Sigmoid colon (tissue), 7 donors: ENCODE measurements at regions of chr2 and their contacts with region 1.

Region 1: DNA sequence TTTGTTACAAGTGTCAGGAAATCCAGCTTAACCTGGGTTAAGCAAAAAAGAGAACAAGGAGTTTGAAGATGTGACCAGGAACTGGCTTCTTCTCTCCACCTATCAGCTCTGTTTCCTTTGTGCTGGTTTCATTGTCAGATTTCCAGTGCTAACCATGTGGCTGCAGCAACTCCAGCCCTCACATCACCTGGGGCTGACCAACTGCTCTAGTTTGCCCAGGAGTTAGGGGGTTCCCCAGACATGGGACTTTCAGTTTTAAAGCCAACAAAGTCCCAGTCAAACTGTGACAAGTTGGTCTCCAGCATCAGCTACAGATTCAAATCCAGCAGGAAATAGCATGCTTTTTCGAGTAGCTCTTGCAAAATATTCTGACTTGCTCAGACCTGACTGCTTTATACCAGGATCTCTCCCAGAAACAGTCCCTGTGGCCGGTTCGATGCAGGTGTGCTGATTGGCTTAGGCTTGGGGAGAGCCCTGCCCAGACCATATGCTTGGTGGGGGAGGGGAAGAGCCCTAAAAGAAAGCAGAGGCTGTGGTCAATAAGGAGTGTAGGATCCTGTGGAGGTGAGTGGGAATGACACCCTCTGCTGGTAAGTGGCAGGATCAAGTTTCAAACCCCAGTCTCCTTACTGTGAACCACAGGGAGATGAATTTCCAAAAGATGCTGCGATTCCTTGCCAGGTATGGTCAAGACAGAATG is 49.5 kb downstream of the KCNE4 start:
- DNase-seq: no peak
- H3K4me3 ChIP-seq: no peak overlapping the region
- H3K27ac ChIP-seq: peak overlapping the region in 2 of 4 donors; percentile 73 to 79
- H3K4me1 ChIP-seq: peaks cover 0 to 53% (median 42%) of the 10 kb centered on the region in 4 donors
- H3K27me3 ChIP-seq: no peaks in the 10 kb centered on the region
- CTCF ChIP-seq: peak in 3 of 4 experiments; percentile 7 to 28 (median 24)
- EP300 ChIP-seq: no peak
- POLR2A ChIP-seq: no peak

Region 2: GRCh38 chr2:223166983-223167650 is 65.6 kb after region 1 on chr2:
- intact Hi-C with region 1: no loop called
- DNase-seq: no peak
- H3K4me3 ChIP-seq: no peak overlapping the region
- H3K27ac ChIP-seq: no peak overlapping the region
- H3K4me1 ChIP-seq: no peaks in the 10 kb centered on the region
- H3K27me3 ChIP-seq: no peaks in the 10 kb centered on the region
- CTCF ChIP-seq: no peak
- EP300 ChIP-seq: no peak
- POLR2A ChIP-seq: no peak

Region 3: GRCh38 chr2:223363085-223363484 is 261.6 kb after region 1 on chr2:
- intact Hi-C with region 1: loop called (anchors 5 kb)
- DNase-seq: no peak
- H3K4me3 ChIP-seq: no peak overlapping the region
- H3K27ac ChIP-seq: peak overlapping the region in 2 of 4 donors; percentile 44 to 48
- H3K4me1 ChIP-seq: peaks cover 0 to 24% (median 13%) of the 10 kb centered on the region in 4 donors
- H3K27me3 ChIP-seq: no peaks in the 10 kb centered on the region
- CTCF ChIP-seq: no peak
- EP300 ChIP-seq: peak; percentile 13 to 74 (median 34)
- POLR2A ChIP-seq: no peak